Activated CD4-positive, alpha-beta memory T cell treated with anti-CD3 and anti-CD28 coated beads, Interleukin-2, amount 10 ng/mL, durations not matched to agents 7 days and 5 days (primary cell): ENCODE measurements at regions of chr1 and their contacts with region 1.

Region 1: DNA sequence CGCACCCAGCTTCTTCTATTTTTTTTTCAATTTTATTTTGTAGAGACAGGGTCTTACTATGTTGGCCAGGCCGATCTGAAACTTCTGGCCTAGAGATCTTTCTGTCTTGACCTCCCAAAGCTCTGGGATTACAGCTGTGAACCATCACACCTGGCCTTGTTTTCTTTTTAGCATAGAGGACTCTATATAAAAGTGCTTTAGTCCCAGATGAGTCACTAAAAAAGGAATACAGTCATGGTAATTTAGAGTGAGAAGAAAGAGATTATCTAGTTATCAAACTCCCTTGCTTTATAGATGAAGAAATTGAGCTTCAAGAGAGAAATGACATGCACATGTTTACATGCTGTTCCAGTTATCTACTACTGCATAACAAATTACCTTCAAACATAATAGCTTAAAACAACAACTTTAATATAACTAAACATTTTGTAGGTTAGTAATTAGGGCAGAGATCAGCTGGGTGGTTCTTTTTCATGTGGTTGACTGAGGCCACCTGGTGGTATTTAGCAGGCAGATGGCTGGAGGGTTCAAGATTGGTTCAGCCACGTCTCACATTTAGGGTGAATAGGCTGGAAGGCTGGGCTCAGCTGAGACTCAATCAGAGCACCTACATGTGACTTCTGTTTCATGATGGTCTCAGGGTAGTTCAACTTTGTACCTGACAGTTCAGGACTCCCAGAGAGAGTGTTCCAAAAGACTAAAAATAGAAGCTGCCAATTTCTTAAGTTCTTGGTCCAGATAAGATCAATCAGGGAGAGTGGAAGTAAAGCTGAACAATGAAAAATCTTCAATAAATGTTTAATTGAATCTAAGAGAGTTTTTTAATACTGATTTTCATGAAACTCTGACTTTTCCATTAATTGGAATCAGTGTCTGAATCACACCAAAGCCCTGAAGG is 16.9 kb upstream of the MTF2 start:
- DNase-seq: peak; percentile 51
- H3K4me3 Mint-ChIP-seq: no peak overlapping the region
- H3K27ac Mint-ChIP-seq: no peak overlapping the region
- H3K4me1 Mint-ChIP-seq: no peaks in the 10 kb centered on the region
- H3K27me3 Mint-ChIP-seq: peaks cover 29% of the 10 kb centered on the region

Region 2: DNA sequence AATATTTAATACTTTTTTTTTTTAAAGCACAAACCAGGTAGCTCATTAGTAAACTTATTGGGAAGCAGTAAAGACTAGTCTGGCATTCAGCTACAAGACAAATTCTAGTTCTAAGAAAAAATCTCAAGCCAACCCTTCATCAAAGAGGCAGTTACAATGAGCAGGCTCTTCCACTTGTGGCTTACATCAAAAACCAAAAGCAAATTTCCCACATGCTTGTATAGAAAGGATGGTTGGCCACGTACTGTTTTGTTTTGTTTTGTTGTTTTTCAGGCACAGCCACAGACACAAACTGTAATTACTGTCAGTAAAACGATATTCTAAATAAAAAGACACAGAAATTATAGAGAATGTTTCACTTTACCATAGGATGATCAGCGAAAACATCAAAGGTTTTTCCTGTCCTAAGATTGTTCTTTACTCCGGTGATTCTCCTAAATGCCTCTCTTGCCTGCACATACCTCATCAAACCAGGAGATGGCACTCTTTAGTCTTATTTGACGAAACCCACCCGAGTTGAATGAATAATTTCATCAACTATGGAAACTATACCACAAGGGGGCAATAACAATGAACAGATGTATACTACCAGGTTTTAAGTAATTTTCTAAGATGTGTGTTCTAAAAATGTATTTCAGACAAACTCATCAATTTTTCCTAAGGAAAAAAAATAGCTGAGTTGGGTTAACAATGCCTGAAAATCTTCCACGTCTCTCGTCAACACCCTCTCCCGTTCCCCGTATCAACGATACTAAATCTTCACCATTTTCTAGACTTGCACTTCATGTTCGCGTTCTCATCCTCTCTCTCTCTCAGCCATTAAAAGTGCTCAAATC is 203.4 kb before region 1 on chr1:
- CTCF ChIA-PET with region 1: interaction called, 14 read pairs
- POLR2A ChIA-PET with region 1: no interaction called
- DNase-seq: peak; percentile 51
- H3K4me3 Mint-ChIP-seq: peak overlapping the region; percentile 32
- H3K27ac Mint-ChIP-seq: peak overlapping the region; percentile 19
- H3K4me1 Mint-ChIP-seq: peaks cover 27% of the 10 kb centered on the region
- H3K27me3 Mint-ChIP-seq: no peaks in the 10 kb centered on the region

Region 3: GRCh38 chr1:92968138-92969032 is 93.8 kb before region 1 on chr1:
- CTCF ChIA-PET with region 1: interaction called, 15 read pairs
- POLR2A ChIA-PET with region 1: no interaction called
- DNase-seq: no peak
- H3K4me3 Mint-ChIP-seq: no peak overlapping the region
- H3K27ac Mint-ChIP-seq: no peak overlapping the region
- H3K4me1 Mint-ChIP-seq: peaks cover 31% of the 10 kb centered on the region
- H3K27me3 Mint-ChIP-seq: no peaks in the 10 kb centered on the region

Region 4: DNA sequence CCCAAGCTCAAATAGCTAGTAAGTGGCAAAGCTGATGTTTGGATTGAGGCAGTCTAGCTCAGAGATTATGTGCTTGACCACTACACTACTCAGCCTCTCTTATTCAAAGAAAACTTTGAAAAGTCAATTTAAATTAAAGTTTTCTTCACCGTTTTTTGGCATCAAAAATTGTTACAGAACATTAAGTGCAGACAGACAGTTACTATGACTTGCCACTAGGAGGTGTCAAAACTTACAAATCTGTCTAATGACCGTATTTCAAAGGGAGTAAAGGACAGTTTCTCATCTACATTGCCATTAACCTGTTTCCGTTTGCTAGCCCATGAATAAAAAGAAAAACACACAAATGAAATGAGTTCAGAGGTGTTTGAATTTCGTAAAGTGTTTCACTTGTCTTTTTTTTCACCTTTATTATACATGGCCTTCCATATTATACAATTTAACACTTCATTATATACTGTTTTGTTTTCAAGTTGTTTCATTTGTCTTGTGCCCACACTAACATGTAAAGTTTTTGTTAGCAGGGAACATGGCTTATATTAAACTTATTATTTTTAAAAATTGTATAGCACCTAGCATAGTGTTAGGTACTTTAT is 40.5 kb before region 1 on chr1:
- CTCF ChIA-PET with region 1: interaction called, 40 read pairs
- POLR2A ChIA-PET with region 1: interaction called, 7 read pairs
- DNase-seq: no peak
- H3K4me3 Mint-ChIP-seq: no peak overlapping the region
- H3K27ac Mint-ChIP-seq: no peak overlapping the region
- H3K4me1 Mint-ChIP-seq: peaks cover 6% of the 10 kb centered on the region
- H3K27me3 Mint-ChIP-seq: peaks cover 29% of the 10 kb centered on the region

Region 5: DNA sequence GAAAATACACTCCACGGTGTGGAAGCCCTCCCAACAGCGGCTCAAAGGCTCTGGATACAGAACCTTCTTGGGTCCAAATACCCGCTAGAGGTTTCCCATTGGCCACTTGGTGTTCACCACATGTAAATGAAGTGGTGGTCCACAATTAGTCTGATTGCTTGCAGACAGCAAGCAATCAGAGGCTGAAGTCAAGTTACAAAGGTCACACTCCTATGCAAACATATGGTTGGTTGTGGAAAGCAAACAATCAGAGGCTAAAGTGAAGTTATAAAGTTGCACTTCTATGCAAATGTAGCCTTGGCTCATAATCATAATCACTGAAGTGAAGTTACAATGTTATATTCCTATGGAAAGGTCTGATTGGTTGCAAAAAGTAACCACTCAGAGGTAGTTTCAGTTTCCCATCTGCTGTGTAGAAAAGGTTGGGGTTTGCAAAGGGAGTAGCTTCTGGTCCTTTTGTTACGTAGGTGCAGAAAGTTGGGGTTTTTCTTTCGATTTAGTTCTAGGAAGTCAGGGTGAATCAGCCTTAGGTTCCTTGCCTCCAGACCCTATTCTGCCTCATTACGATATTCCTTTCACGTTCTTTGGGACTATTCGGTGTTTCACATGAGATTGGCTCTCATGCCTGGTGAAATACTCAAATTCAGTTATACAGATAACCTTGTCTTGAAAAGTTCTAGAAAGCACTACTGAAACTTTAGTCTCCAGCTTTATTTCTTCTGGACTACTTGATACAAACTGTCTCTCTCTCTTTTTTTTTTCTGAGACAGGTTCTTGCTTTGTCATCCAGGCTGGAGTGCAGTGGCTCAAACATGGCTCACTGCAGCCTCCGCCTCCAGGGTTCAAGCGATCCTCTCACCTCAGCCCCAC is 19.7 kb before region 1 on chr1:
- CTCF ChIA-PET with region 1: interaction called, 11 read pairs
- POLR2A ChIA-PET with region 1: interaction called, 6 read pairs
- DNase-seq: peak; percentile 35
- H3K4me3 Mint-ChIP-seq: peak overlapping the region; percentile 70
- H3K27ac Mint-ChIP-seq: peak overlapping the region; percentile 90
- H3K4me1 Mint-ChIP-seq: peaks cover 39% of the 10 kb centered on the region
- H3K27me3 Mint-ChIP-seq: no peaks in the 10 kb centered on the region